ENCODE measurements at regions of chr6 and their contacts with region 1.

Region 1: DNA sequence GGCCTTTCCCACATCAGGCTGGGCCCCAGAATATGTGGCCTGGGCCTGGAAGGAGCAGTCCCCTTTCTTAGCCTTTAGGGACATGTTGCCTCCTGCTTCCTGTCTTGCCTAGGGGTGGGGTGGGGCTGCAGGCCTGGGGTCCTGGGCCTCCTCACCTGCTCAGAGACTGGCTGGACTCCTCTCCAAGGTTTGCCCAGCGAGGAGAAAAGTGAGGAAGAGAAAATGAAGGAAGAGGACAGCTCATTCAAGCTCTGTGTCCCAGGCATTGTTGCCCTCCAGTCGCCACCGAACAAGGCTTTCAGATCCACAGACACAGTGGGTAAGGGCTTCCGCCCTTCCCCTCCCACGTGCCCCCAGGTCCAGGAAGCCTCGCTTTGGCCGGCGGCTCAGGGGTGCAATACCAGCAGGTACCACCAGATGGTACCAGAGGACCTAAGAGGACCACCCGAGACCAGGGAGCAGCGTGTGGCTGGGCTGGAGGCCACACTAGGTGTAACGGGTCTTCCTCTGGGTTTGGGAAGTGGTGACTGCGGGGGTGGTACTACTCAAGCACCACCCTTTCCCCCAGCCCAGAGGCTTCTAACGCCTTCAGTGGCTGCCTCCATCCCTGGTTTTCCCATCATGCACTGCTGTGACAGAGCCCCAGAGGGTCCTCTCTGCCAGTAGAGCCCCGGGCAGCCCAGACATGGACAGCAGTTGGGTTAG is 5.5 kb upstream of the BAK1 start:
- DNase-seq: peak; percentile 91
- H3K4me3 ChIP-seq: no peak overlapping the region
- H3K27ac ChIP-seq: no peak overlapping the region
- H3K4me1 ChIP-seq: peaks cover 23 to 28% (median 27%) of the 10 kb centered on the region in 4 donors
- H3K27me3 ChIP-seq: no peaks in the 10 kb centered on the region
- CTCF ChIP-seq: peak; percentile 97 to 100 (median 99)
- EP300 ChIP-seq: no peak
- POLR2A ChIP-seq: no peak

Region 2: DNA sequence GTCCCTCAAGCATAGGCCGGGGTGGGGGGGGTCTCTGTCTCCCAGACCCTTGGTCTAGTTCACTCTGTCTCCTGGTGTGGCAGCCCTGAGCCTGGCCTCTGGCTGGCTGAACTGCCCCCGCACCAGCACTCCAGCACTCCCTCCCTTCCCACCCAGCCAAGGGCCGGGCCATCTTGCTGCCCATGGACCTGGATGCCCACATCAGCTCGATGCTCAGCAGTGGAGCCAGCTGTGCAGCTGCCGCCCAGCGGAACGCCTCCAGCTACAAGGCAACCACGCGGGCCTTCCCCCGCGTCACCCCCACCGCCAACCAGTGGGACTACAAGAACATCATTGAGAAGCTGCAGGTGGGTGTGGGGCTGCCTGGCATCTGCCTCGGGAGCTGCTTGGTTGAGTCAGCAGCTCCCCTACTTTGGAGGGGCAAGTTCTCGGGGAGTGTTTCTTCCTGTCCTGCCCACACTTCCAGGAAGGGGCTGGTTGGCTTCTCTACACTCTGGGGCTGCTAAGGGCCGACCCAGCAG is 97.6 kb after region 1 on chr6:
- in situ Hi-C with region 1: no loop called
- intact Hi-C with region 1: loop called (anchors 10 kb)
- DNase-seq: no peak
- H3K4me3 ChIP-seq: no peak overlapping the region
- H3K27ac ChIP-seq: no peak overlapping the region
- H3K4me1 ChIP-seq: no peaks in the 10 kb centered on the region
- H3K27me3 ChIP-seq: no peaks in the 10 kb centered on the region
- CTCF ChIP-seq: no peak
- EP300 ChIP-seq: no peak
- POLR2A ChIP-seq: no peak

Region 3: DNA sequence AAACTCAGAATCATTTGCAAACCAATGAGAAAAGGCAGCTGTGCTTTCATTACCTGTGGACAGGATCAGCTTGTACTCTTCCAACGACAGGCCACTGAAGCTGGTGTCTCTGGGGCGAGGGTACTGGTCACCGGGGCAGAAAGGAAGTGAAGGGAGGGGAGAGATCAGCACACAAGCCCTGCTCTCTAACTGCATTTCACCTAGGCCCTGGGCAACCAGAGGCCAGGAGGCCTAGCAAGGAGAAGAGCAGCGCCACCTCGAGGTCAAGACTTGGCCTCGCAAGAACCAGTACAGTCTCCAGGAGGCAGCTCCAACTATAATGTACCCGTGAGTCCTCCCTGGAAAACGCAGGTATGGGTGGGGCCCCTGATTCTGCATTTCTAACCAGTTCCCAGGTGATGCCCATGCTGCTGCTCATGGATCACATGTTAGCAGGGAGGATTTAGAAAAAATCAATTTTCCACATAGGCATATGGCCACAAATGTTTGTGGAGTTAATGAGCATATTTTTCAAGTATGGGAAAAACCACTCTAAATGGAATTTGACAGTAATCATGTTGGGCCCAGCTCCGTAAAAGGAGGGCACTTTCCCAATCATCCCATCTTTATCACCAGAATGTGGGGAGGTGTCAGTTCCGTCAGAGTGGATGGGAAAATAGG is 115.0 kb after region 1 on chr6:
- in situ Hi-C with region 1: loop called in 3 of 4 experiments (anchors 5 to 10 kb)
- intact Hi-C with region 1: loop called (anchors 5 kb)
- DNase-seq: peak; percentile 84
- H3K4me3 ChIP-seq: no peak overlapping the region
- H3K27ac ChIP-seq: peak overlapping the region in 1 of 4 donors; percentile 16
- H3K4me1 ChIP-seq: peaks cover 0 to 12% (median 0%) of the 10 kb centered on the region in 4 donors
- H3K27me3 ChIP-seq: no peaks in the 10 kb centered on the region
- CTCF ChIP-seq: peak; percentile 56 to 75 (median 74)
- EP300 ChIP-seq: no peak
- POLR2A ChIP-seq: no peak

Measured in transverse colon (tissue), 4 donors.